Heart left ventricle (tissue), 16 donors: ENCODE measurements at regions of chr1 and their contacts with region 1.

Region 1: GRCh38 chr1:156987715-156988114 is 57.8 kb downstream of the ARHGEF11 start:
- DNase-seq: no peak
- ATAC-seq: no peak
- H3K4me3 ChIP-seq: no peak overlapping the region
- H3K27ac ChIP-seq: no peak overlapping the region
- H3K4me1 ChIP-seq: no peaks in the 10 kb centered on the region
- H3K27me3 ChIP-seq: no peaks in the 10 kb centered on the region
- CTCF ChIP-seq: no peak
- POLR2A ChIP-seq: no peak

Region 2: DNA sequence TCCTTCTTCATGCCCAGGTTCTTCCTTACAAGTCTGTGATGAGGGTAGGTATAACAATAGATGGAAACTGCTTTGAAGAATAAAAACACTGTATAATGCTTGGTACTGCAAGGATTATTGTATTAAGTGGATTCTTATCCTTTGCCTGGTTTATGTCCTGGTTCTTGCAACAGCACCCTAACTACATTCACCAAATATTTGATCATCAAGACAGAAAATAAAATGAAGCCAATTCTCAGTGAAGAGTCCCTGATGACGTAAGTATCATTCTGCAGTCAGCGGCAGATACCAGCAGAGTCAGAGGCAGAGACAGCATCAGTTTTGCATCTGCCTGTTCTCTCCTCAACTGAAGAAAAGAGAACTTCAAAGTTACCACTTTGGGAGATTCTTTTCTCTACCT is 38.1 kb after region 1 on chr1:
- intact Hi-C with region 1: loop called in 1 of 10 experiments (anchors 5 kb)
- DNase-seq: no peak
- ATAC-seq: peak in 1 of 4 donors; percentile 59
- H3K4me3 ChIP-seq: no peak overlapping the region
- H3K27ac ChIP-seq: no peak overlapping the region
- H3K4me1 ChIP-seq: peaks cover 0 to 26% (median 9%) of the 10 kb centered on the region in 12 donors
- H3K27me3 ChIP-seq: no peaks in the 10 kb centered on the region
- CTCF ChIP-seq: no peak
- POLR2A ChIP-seq: no peak

Region 3: GRCh38 chr1:157045251-157046218 is 57.8 kb after region 1 on chr1 and contains the start of gene ARHGEF11:
- intact Hi-C with region 1: loop called in 2 of 10 experiments (anchors 10 kb)
- DNase-seq: peak; percentile 93 to 95 (median 94)
- ATAC-seq: peak; percentile 90 to 98 (median 98)
- H3K4me3 ChIP-seq: peak within 1 kb of the TSS; percentile 39 to 92 (median 69)
- H3K27ac ChIP-seq: peak within 1 kb of the TSS; percentile 76 to 94 (median 90)
- H3K4me1 ChIP-seq: peaks cover 3 to 49% (median 44%) of the 10 kb centered on the region in 12 donors
- H3K27me3 ChIP-seq: peaks cover 0 to 4% (median 0%) of the 10 kb centered on the region in 9 donors
- CTCF ChIP-seq: no peak
- POLR2A ChIP-seq: peak in 1 of 2 donors; percentile 66
- total RNA-seq, gene ARHGEF11: 22.0 to 44.1 (median 32.4) TPM

Region 4: GRCh38 chr1:157073944-157074767 is 86.4 kb after region 1 on chr1:
- intact Hi-C with region 1: loop called in 4 of 10 experiments (anchors 10 kb)
- DNase-seq: peak; percentile 60 to 80 (median 74)
- ATAC-seq: peak in 2 of 4 donors; percentile 56 to 71
- H3K4me3 ChIP-seq: peak overlapping the region in 8 of 12 donors; percentile 10 to 43 (median 28)
- H3K27ac ChIP-seq: no peak overlapping the region
- H3K4me1 ChIP-seq: peaks cover 0 to 8% (median 3%) of the 10 kb centered on the region in 12 donors
- H3K27me3 ChIP-seq: peaks cover 0 to 9% (median 0%) of the 10 kb centered on the region in 9 donors
- CTCF ChIP-seq: peak; percentile 58 to 81 (median 66)
- POLR2A ChIP-seq: no peak